ENCODE measurements at regions of chr6 and their contacts with region 1.

Region 1: DNA sequence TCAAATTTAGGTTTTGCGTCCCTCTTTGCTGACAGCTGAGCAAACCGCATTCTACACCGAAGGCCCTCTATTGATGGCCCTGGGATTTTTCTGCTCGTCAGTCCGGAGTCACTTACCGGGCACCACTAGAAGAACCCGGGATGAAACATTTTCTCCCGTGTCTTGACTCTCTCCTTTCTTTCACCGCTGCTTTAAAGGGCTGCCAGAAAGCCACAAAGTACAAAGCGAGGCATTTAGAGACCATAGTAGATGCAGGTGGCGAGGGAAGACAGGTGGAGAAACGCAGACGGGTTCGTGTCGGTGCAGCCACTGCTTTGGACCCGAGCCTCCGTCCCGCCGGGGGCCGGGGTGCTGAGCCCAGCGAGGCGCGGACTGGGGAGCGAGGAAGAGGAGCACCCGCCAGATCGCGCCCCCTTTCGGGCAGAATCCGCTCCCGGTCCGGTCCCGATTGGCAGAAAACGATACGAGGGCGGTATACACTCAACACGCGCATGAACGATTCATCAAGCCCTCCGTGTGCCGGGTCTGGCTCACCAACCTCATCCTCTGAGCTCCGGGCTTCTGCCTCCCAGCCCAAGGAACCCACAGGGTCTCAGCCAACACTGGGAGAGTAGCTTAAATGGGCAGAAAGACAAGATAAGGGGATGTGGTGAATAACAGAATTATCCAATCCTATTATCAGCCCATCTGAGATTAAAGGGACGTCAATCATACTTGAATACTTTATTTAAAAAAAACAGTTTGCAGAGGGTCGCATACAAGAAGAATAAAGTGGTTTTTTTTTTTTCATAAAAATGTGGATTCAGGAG is 84.9 kb downstream of the TRIM27 start:
- DNase-seq: peak; percentile 95
- ATAC-seq: peak; percentile 89
- H3K4me3 Mint-ChIP-seq: peak overlapping the region; percentile 99
- H3K27ac Mint-ChIP-seq: peak overlapping the region; percentile 92
- H3K4me1 Mint-ChIP-seq: peaks cover 11% of the 10 kb centered on the region
- H3K27me3 Mint-ChIP-seq: peaks cover 40% of the 10 kb centered on the region
- CTCF ChIP-seq: peak; percentile 58; the same call in 1 of the 2 replicates

Region 2: DNA sequence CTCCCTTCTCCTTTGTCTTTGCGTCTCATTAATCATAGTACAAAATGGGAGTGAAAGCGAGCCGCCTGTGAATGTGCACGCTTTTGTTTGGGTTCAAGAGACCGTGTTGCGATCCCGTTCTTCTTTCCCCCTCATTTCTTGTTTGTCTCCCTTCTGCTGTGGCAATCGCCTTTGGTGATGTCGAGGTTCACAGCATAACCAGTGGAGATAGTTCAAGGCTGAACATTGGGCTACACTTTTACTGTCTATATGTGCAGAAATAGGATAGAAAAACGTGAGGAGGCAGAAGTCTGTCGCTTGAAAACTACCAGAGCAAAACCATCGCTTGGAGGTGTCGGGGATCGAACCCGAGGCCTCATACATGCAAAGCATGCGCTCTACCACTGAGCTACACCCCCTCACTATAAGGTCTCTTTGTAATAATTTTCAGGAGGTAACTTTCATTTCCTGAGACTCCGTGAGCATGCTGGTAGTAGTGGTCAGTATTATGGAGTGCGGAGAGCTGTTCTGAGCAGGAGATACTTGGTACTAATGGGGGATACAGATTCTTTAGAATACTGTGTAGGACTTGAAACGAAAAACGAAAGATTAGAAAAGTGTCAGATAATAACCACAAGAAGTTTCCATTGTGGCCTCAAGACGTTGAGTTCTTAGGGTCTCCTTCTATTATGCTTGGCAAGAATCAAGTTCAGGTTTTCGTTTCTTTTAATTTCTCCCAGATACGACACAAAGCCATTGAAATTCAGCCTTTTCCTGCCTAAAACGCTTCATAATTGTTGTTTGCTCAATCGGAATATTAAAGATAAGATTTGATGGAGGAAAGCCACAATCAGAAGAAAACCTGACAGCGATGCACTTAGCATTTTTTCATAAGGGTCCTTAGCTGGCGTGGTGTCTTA is 21.7 kb before region 1 on chr6:
- CTCF ChIA-PET with region 1: interaction called, 16 read pairs
- POLR2A ChIA-PET with region 1: no interaction called
- DNase-seq: peak; percentile 76
- ATAC-seq: peak; percentile 73
- H3K4me3 Mint-ChIP-seq: peak overlapping the region; percentile 77
- H3K27ac Mint-ChIP-seq: no peak overlapping the region
- H3K4me1 Mint-ChIP-seq: peaks cover 53% of the 10 kb centered on the region
- H3K27me3 Mint-ChIP-seq: peaks cover 92% of the 10 kb centered on the region
- CTCF ChIP-seq: no peak

Region 3: GRCh38 chr6:28863604-28864320 is 24.9 kb after region 1 on chr6:
- CTCF ChIA-PET with region 1: interaction called, 16 read pairs
- POLR2A ChIA-PET with region 1: interaction called, 10 read pairs
- DNase-seq: peak; percentile 73
- ATAC-seq: peak; percentile 46
- H3K4me3 Mint-ChIP-seq: peak overlapping the region; percentile 88
- H3K27ac Mint-ChIP-seq: peak overlapping the region; percentile 47
- H3K4me1 Mint-ChIP-seq: peaks cover 27% of the 10 kb centered on the region
- H3K27me3 Mint-ChIP-seq: peaks cover 30% of the 10 kb centered on the region
- CTCF ChIP-seq: no peak

Region 4: GRCh38 chr6:28895134-28895812 is 56.4 kb after region 1 on chr6:
- CTCF ChIA-PET with region 1: interaction called, 17 read pairs
- POLR2A ChIA-PET with region 1: interaction called, 12 read pairs
- DNase-seq: peak; percentile 92
- ATAC-seq: peak; percentile 84
- H3K4me3 Mint-ChIP-seq: peak overlapping the region; percentile 91
- H3K27ac Mint-ChIP-seq: peak overlapping the region; percentile 97
- H3K4me1 Mint-ChIP-seq: peaks cover 9% of the 10 kb centered on the region; the same call in 1 of the 2 replicates
- H3K27me3 Mint-ChIP-seq: 0 out of 2 replicates have a peak, but pooled peaks cover 2% of the 10 kb centered on the region
- CTCF ChIP-seq: no peak

Region 5: DNA sequence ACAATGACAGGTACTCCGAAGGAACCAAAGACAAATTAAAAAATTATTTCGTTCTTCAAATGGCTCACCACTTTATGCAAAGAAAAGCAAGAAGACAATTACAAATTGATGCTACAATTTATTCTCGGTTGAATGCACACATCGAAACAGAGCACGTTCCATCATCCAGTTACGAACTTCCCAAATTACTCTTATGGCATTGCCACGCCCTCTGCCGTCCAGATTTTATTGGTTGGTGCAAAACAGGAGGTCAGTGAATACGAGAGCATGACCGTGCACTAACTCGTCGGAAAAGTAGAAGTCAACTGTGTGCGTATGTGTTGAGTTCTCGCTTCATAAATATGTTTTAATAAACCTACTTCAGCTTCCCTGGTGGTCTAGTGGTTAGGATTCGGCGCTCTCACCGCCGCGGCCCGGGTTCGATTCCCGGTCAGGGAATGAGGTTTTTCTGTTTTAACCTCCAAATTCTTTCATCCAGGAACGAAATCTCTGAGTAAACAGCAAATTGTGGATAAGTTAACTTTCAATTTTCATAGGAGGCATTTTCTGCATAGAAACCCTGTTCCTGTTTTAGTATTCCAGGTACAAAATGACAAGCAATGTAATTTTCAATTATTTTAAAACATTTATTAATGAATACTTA is 143.1 kb after region 1 on chr6:
- CTCF ChIA-PET with region 1: interaction called, 15 read pairs
- POLR2A ChIA-PET with region 1: interaction called, 3 read pairs
- DNase-seq: peak; percentile 70
- ATAC-seq: no peak; the same call in 1 of the 2 replicates
- H3K4me3 Mint-ChIP-seq: peak overlapping the region; percentile 92
- H3K27ac Mint-ChIP-seq: peak overlapping the region; percentile 89
- H3K4me1 Mint-ChIP-seq: peaks cover 55% of the 10 kb centered on the region
- H3K27me3 Mint-ChIP-seq: peaks cover 21% of the 10 kb centered on the region
- CTCF ChIP-seq: no peak

Region 6: DNA sequence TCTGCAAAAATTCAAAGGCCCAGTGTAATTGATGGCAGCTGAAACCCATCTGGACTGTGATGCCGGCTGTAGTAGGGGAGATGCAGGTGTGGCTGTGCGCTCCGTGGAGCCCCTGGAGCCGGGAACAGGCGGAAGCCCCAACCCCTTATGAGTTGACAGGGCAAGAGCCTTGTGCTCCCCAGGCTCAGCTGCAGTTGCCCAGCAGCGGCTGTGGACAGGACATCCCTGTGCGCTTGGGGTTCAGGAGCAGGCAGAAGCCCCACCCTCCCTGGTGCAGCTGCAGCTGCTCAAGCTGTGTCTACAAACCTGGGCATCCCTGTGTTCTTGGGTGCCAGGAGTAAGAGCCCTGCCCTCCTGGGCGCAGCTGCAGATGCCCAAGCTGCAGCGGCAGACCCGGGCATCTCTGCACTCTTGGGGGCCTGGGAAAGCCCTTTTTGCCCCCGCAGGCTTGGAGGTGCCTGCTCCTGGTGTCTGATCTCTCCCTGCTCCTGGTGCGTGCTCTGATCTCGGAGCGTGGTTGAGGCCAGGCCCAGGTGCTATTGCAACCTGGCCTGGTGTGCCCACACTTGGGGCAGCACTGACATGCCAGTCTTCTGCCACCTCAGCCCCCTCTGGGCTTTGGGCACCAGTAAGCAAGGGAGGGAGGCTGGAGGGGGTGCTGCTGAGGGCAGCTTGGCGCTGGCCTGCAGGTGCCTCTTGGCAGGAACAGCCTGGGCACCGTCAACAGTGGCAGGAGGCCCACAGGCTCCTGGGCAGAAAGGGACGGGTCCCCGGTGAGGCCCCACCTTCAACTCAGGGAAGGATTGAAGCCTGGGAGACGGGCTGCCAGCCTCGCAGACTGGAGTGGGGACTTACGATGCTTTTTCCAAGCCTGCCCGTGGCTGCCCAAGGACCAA is 362.2 kb after region 1 on chr6:
- CTCF ChIA-PET with region 1: no interaction called
- POLR2A ChIA-PET with region 1: no interaction called
- DNase-seq: no peak
- ATAC-seq: no peak
- H3K4me3 Mint-ChIP-seq: no peak overlapping the region
- H3K27ac Mint-ChIP-seq: no peak overlapping the region
- H3K4me1 Mint-ChIP-seq: no peaks in the 10 kb centered on the region
- H3K27me3 Mint-ChIP-seq: peaks cover 2% of the 10 kb centered on the region
- CTCF ChIP-seq: no peak

Region 7: GRCh38 chr6:29345380-29345779 is 506.5 kb after region 1 on chr6:
- CTCF ChIA-PET with region 1: no interaction called
- POLR2A ChIA-PET with region 1: no interaction called
- DNase-seq: no peak
- ATAC-seq: no peak
- H3K4me3 Mint-ChIP-seq: no peak overlapping the region
- H3K27ac Mint-ChIP-seq: no peak overlapping the region
- H3K4me1 Mint-ChIP-seq: no peaks in the 10 kb centered on the region
- H3K27me3 Mint-ChIP-seq: no peaks in the 10 kb centered on the region
- CTCF ChIP-seq: no peak